Caco-2 (cell line): ENCODE measurements at regions of chr10 and their contacts with region 1.

Region 1: GRCh38 chr10:121734589-121735045 is 136.4 kb upstream of the FGFR2 start:
- DNase-seq: peak in 1 of 2 experiments; percentile 57
- H3K4me3 ChIP-seq: peak overlapping the region; percentile 34
- H3K4me3 Mint-ChIP-seq: peak overlapping the region; percentile 76
- H3K27ac Mint-ChIP-seq: peak overlapping the region; percentile 52
- H3K4me1 ChIP-seq: peaks cover 3% of the 10 kb centered on the region; the same call in 1 of the 2 replicates
- H3K4me1 Mint-ChIP-seq: peaks cover 36% of the 10 kb centered on the region
- H3K27me3 ChIP-seq: no peaks in the 10 kb centered on the region
- H3K27me3 Mint-ChIP-seq: no peaks in the 10 kb centered on the region
- CTCF ChIP-seq: peak; percentile 68 to 82

Region 2: DNA sequence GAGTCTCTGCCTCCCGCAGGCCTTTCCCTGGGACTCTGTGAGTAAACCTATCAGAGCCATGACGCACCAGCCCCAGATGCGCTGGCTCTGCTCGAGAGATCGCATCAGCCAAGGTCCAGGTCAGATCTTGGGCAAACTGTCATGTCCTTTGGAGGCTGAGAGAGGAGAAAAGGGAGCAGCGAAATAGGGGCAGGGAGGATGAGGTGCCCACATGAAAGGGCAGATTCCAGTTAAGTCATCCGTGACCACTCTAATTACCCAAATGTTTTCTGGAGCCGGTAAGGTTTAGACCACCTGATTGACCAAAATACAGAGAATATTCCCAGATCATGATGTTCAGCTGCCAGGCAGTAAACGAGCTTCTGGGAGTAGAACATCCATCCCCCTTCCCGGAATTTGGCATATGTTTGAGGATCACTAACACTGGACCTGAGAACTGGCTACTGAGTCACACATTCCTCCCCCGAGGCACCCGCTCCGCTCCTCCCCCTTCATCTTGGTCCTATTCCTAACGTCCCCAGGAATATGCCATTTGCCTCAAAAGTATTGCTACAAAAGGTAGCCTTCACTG is 224.3 kb before region 1 on chr10:
- CTCF ChIA-PET with region 1: no interaction called
- POLR2A ChIA-PET with region 1: no interaction called
- intact Hi-C with region 1: no loop called
- DNase-seq: no peak
- H3K4me3 ChIP-seq: no peak overlapping the region
- H3K4me3 Mint-ChIP-seq: peak overlapping the region; percentile 24
- H3K27ac Mint-ChIP-seq: peak overlapping the region; percentile 52
- H3K4me1 ChIP-seq: peaks cover 69% of the 10 kb centered on the region
- H3K4me1 Mint-ChIP-seq: peaks cover 51% of the 10 kb centered on the region
- H3K27me3 ChIP-seq: no peaks in the 10 kb centered on the region
- H3K27me3 Mint-ChIP-seq: no peaks in the 10 kb centered on the region
- CTCF ChIP-seq: no peak

Region 3: DNA sequence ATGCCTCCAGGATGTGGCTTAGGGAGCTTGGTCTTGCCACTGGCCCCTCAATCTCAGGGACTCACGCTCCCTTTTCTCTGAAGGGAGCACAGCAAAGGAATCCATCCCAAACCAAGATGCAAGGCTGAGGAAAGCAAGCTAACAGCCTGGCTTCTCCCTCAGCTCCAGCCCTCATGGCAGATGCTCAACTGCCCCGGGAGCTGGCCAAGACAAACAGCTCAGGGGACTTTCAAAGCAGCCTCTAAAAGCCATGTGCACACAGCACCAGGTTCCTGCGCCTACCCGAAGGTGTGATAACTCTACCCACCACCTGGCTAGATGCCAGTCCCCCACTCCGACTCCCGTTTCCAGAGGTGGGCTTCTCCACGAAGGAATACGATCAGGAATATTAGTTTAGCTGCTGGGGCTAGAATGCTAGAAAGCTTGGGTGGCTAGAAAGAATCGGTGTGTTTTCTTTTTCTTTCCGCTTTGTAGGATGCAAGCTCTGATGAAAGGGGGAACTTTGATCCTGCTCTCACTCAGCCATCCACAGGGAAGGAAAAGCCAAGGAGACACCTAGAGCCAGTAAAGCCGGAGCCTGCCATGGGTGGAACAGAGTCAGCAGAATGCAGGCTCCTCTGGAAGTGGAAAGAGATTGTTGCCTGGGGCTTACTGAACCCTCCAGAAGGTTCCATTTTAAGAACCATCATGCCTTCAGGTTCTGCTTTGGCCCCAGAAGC is 47.4 kb before region 1 on chr10:
- CTCF ChIA-PET with region 1: no interaction called
- POLR2A ChIA-PET with region 1: no interaction called
- intact Hi-C with region 1: loop called (anchors 2 kb)
- DNase-seq: no peak
- H3K4me3 ChIP-seq: no peak overlapping the region
- H3K4me3 Mint-ChIP-seq: no peak overlapping the region
- H3K27ac Mint-ChIP-seq: no peak overlapping the region
- H3K4me1 ChIP-seq: peaks cover 41% of the 10 kb centered on the region
- H3K4me1 Mint-ChIP-seq: peaks cover 32% of the 10 kb centered on the region
- H3K27me3 ChIP-seq: no peaks in the 10 kb centered on the region
- H3K27me3 Mint-ChIP-seq: no peaks in the 10 kb centered on the region
- CTCF ChIP-seq: no peak

Region 4: DNA sequence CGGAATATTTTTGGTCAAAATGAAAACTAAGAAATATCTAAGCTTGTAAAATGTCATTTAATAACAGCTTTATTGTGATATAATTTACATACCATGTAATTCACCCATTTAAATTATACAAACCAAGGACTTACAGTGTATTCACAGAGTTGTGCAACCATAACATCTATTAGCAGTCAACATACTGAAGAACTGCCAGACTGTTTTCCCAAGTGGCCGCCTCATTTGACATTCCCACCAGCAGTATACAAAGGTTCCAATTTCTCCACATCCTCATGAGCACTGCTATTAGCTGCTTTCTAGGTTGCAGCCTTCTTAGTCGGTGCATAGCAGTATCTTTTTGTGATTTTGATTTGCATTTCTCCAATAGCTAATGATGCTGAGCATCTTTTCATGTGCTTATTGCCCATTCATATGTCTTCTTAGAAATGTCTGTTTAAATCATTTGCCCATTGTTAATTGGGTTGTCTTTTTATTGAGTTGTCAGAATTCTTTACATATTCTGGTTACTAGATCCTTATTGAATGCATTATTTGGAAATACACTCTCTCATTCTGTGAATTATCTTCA is 16.7 kb after region 1 on chr10:
- CTCF ChIA-PET with region 1: no interaction called
- POLR2A ChIA-PET with region 1: no interaction called
- intact Hi-C with region 1: no loop called
- DNase-seq: no peak
- H3K4me3 ChIP-seq: no peak overlapping the region
- H3K4me3 Mint-ChIP-seq: no peak overlapping the region
- H3K27ac Mint-ChIP-seq: no peak overlapping the region
- H3K4me1 ChIP-seq: no peaks in the 10 kb centered on the region
- H3K4me1 Mint-ChIP-seq: peaks cover 18% of the 10 kb centered on the region
- H3K27me3 ChIP-seq: no peaks in the 10 kb centered on the region
- H3K27me3 Mint-ChIP-seq: no peaks in the 10 kb centered on the region
- CTCF ChIP-seq: no peak

Region 5: GRCh38 chr10:122126763-122127659 is 392.4 kb after region 1 on chr10:
- CTCF ChIA-PET with region 1: no interaction called
- POLR2A ChIA-PET with region 1: no interaction called
- intact Hi-C with region 1: no loop called
- DNase-seq: peak; percentile 70 to 73
- H3K4me3 ChIP-seq: no peak overlapping the region
- H3K4me3 Mint-ChIP-seq: peak overlapping the region; percentile 38
- H3K27ac Mint-ChIP-seq: peak overlapping the region; percentile 74
- H3K4me1 ChIP-seq: peaks cover 24% of the 10 kb centered on the region
- H3K4me1 Mint-ChIP-seq: peaks cover 4% of the 10 kb centered on the region
- H3K27me3 ChIP-seq: no peaks in the 10 kb centered on the region
- H3K27me3 Mint-ChIP-seq: no peaks in the 10 kb centered on the region
- CTCF ChIP-seq: no peak

Region 6: GRCh38 chr10:122154545-122155366 is 420.1 kb after region 1 on chr10:
- CTCF ChIA-PET with region 1: no interaction called
- POLR2A ChIA-PET with region 1: no interaction called
- intact Hi-C with region 1: no loop called
- DNase-seq: no peak
- H3K4me3 ChIP-seq: no peak overlapping the region
- H3K4me3 Mint-ChIP-seq: no peak overlapping the region
- H3K27ac Mint-ChIP-seq: no peak overlapping the region
- H3K4me1 ChIP-seq: no peaks in the 10 kb centered on the region
- H3K4me1 Mint-ChIP-seq: no peaks in the 10 kb centered on the region
- H3K27me3 ChIP-seq: no peaks in the 10 kb centered on the region
- H3K27me3 Mint-ChIP-seq: no peaks in the 10 kb centered on the region
- CTCF ChIP-seq: no peak